Mammary epithelial cell (primary cell): ENCODE measurements at regions of chr13 and their contacts with region 1.

Region 1: DNA sequence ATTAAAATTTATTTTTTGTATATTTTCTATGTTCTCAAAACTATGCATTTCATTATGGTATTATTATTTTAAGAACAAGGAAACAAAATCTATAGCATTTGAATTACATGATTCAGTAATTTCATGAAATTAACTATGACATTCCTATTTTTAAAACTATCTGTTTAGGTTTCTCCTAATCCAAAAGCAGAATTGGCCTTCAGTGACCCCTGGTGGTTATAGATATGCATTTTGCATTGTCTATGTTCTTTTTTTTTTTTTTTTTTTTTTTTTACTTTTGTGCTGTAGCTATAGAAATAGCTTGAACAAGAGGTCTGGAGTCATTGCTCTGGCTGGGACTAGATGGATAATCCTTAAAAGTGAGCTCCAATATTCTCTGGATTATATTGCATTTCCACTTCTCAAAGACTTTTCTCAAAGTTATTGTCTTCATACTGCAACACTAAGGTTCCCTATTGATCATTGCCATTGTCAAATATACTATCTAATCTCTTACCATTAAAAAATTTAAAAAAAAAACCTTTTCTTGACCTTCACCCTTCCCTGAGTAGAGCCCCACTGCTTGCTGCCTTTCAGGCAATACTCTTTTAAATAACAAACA is 15.9 kb upstream of the DNAJC3 start:
- DNase-seq: peak; percentile 24
- H3K4me3 ChIP-seq: no peak overlapping the region
- H3K27ac ChIP-seq: no peak overlapping the region
- H3K4me1 ChIP-seq: no peaks in the 10 kb centered on the region
- H3K27me3 ChIP-seq: no peaks in the 10 kb centered on the region
- CTCF ChIP-seq: peak; percentile 72 to 76

Region 2: GRCh38 chr13:95624020-95624419 is 37.1 kb before region 1 on chr13:
- CTCF ChIA-PET with region 1: interaction called, 14 read pairs
- dilution Hi-C with region 1: no loop called
- in situ Hi-C with region 1: no loop called
- intact Hi-C with region 1: loop called (anchors 1 kb)
- DNase-seq: peak; percentile 40
- H3K4me3 ChIP-seq: no peak overlapping the region
- H3K27ac ChIP-seq: no peak overlapping the region
- H3K4me1 ChIP-seq: no peaks in the 10 kb centered on the region
- H3K27me3 ChIP-seq: no peaks in the 10 kb centered on the region
- CTCF ChIP-seq: peak; percentile 41 to 69

Region 3: DNA sequence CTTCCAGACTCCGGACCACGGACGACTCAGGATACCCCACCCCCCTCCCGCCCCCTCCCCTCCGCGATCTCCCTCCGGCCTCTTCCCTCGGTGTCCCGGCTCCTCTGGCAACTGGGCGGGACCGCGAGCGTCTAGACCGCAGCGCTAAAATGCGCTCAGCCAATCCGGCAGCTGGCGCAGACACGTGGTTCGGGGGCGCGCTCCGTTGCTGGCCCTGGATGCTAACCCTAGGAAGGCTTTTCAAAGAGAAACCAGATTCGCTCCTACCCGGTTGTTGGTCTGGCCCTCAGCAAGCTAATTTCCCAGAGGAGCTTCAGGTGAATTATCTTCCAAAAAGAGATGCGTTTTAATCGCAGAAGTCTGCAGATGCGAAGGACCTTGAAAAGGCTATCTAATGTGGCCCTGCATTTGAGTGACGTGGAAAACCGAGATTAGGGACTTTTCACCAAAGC is 16.5 kb before region 1 on chr13 and contains the start of gene DZIP1:
- CTCF ChIA-PET with region 1: interaction called, 11 read pairs
- dilution Hi-C with region 1: no loop called
- in situ Hi-C with region 1: no loop called
- intact Hi-C with region 1: no loop called
- DNase-seq: peak; percentile 77
- H3K4me3 ChIP-seq: peak within 1 kb of the TSS; percentile 63 to 71 (median 70)
- H3K27ac ChIP-seq: peak within 1 kb of the TSS; percentile 36
- H3K4me1 ChIP-seq: peaks cover 23% of the 10 kb centered on the region
- H3K27me3 ChIP-seq: no peaks in the 10 kb centered on the region
- CTCF ChIP-seq: no peak
- total RNA-seq, gene DZIP1: 28.3 to 29.3 TPM